ENCODE measurements at regions of chr1 and their contacts with region 1.

Region 1: GRCh38 chr1:54571803-54572541 is 23.9 kb downstream of the ACOT11 start:
- DNase-seq: peak; percentile 50
- H3K4me3 ChIP-seq: no peak overlapping the region
- H3K27ac ChIP-seq: peak overlapping the region; percentile 61
- H3K4me1 ChIP-seq: peaks cover 31% of the 10 kb centered on the region
- H3K27me3 ChIP-seq: no peaks in the 10 kb centered on the region
- CTCF ChIP-seq: no peak
- POLR2A ChIP-seq: no peak

Region 2: GRCh38 chr1:54542120-54542961 is 29.6 kb before region 1 on chr1:
- CTCF ChIA-PET with region 1: interaction called, 7 read pairs
- POLR2A ChIA-PET with region 1: no interaction called
- dilution Hi-C with region 1: no loop called
- intact Hi-C with region 1: loop called (anchors 1 kb)
- DNase-seq: peak; percentile 38
- H3K4me3 ChIP-seq: peak overlapping the region; percentile 37 to 56 (median 39)
- H3K27ac ChIP-seq: peak overlapping the region; percentile 54
- H3K4me1 ChIP-seq: peaks cover 19% of the 10 kb centered on the region
- H3K27me3 ChIP-seq: no peaks in the 10 kb centered on the region
- CTCF ChIP-seq: peak in 1 of 2 donors; percentile 16
- POLR2A ChIP-seq: peak; percentile 29

Region 3: GRCh38 chr1:54715493-54716298 is 143.7 kb after region 1 on chr1 and contains the start of gene TTC4:
- CTCF ChIA-PET with region 1: no interaction called
- POLR2A ChIA-PET with region 1: no interaction called
- dilution Hi-C with region 1: no loop called
- intact Hi-C with region 1: loop called (anchors 5 kb)
- DNase-seq: peak; percentile 81
- H3K4me3 ChIP-seq: peak within 1 kb of the TSS; percentile 68 to 98 (median 95)
- H3K27ac ChIP-seq: peak within 1 kb of the TSS; percentile 77
- H3K4me1 ChIP-seq: peaks cover 11% of the 10 kb centered on the region
- H3K27me3 ChIP-seq: peaks cover 0 to 2% of the 10 kb centered on the region in 2 experiments
- CTCF ChIP-seq: no peak
- POLR2A ChIP-seq: peak; percentile 96
- total RNA-seq, gene TTC4: 21.4 and 28.8 TPM in 2 replicates

Measured in endothelial cell of umbilical vein (primary cell).